Sigmoid colon (tissue), 7 donors: ENCODE measurements at regions of chr3 and their contacts with region 1.

Region 1: DNA sequence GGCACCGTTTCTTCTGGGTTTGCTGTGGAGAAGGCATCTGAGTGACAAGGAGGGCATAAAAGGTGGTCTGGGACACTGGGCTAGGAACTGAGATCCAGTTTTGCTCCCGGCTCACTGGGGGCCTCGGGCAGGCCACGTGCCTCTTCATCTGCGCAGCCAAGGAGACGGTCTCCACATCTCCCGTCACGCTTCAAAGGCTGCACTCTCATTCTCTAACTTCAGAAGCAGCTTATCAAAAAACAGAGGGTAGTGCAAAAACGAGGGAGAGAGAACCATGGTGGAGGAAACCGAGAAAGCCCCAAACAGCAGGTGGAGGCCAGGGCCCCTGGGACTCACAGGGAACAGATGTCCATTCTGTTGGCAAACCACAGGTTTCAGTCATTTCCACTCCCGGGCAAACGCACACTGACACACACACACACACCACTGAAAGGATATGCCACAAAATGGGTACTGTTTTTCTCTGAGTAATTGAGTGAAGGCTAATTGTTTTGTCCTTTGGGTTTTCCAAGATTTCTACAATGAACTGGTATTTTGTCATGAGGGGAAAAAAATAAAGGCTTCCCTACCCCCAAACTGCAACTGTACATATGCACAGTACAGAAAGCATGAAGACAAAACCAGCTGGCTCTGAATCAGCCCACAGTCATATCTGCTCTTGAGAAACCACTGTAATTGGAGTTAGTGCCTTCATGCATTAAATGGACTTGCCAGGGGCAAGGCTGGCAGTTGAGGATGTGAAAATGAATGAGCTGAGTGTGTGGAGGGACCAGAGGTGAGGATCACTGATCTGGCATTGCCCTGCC is 71.9 kb downstream of the MGLL start:
- DNase-seq: no peak
- H3K4me3 ChIP-seq: no peak overlapping the region
- H3K27ac ChIP-seq: peak overlapping the region in 2 of 4 donors; percentile 73 to 74
- H3K4me1 ChIP-seq: peaks cover 0 to 53% (median 33%) of the 10 kb centered on the region in 4 donors
- H3K27me3 ChIP-seq: no peaks in the 10 kb centered on the region
- CTCF ChIP-seq: no peak
- EP300 ChIP-seq: no peak
- POLR2A ChIP-seq: no peak

Region 2: GRCh38 chr3:127690823-127691452 is 59.5 kb before region 1 on chr3:
- intact Hi-C with region 1: no loop called
- DNase-seq: no peak
- H3K4me3 ChIP-seq: no peak overlapping the region
- H3K27ac ChIP-seq: peak overlapping the region; percentile 74 to 86 (median 82)
- H3K4me1 ChIP-seq: peaks cover 0 to 40% (median 37%) of the 10 kb centered on the region in 4 donors
- H3K27me3 ChIP-seq: no peaks in the 10 kb centered on the region
- CTCF ChIP-seq: peak; percentile 44 to 63 (median 59)
- EP300 ChIP-seq: no peak
- POLR2A ChIP-seq: no peak

Region 3: GRCh38 chr3:127710155-127710941 is 40.1 kb before region 1 on chr3:
- intact Hi-C with region 1: loop called (anchors 5 kb)
- DNase-seq: peak; percentile 73
- H3K4me3 ChIP-seq: no peak overlapping the region
- H3K27ac ChIP-seq: peak overlapping the region; percentile 59 to 85 (median 72)
- H3K4me1 ChIP-seq: peaks cover 0 to 59% (median 44%) of the 10 kb centered on the region in 4 donors
- H3K27me3 ChIP-seq: no peaks in the 10 kb centered on the region
- CTCF ChIP-seq: no peak
- EP300 ChIP-seq: no peak
- POLR2A ChIP-seq: no peak